ENCODE measurements at regions of chr11 and their contacts with region 1.

Region 1: GRCh38 chr11:125111343-125112207 is at the start of gene TMEM218:
- DNase-seq: peak; percentile 98
- H3K4me3 Mint-ChIP-seq: peak within 1 kb of the TSS; percentile 88
- H3K27ac Mint-ChIP-seq: peak within 1 kb of the TSS; percentile 82
- H3K4me1 Mint-ChIP-seq: peaks cover 13% of the 10 kb centered on the region
- H3K27me3 Mint-ChIP-seq: no peaks in the 10 kb centered on the region
- total RNA-seq, gene TMEM218: 12.8 to 14.8 TPM

Region 2: DNA sequence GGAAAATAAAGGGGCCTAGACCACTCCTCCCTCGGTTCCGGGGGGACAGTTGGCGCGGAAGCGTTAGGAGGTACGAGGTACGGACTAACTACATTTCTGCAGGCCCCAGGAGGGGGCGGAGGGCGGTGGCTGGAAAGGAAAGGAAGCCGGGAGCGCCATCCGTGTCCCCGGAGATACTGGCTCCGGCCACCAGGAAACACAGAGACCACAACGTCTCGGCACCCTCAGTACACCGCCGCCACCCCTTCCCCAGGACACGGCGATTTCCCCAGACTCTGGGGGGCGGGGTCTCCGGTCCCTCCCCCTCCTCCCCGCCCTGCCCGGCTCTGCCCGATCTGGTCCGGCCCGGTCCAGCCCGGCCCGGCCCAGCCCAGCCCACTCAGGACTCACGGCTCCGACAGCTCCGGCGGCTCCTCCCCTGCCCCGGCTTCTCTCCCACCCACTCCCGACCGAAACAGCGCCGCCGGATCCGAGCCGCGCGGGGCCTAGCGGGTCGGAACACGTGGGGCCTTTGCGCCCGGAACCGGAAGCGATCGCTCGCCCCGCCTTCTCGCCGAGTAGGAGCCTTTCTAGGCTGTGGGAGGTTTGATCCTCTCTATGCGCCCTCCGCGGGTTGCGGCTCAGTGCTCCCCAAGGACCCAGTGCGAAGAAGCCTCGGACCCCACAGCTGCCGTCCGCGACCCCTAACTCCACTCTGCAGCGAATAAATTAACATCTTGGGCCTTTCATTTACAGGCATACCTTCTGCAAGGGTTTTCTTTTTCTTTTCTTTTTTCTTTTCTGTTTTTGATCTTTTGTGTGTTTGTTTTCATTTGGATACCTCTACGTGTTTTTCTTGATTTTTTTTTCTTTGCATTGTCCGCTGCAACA is 1370.2 kb before region 1 on chr11 and contains the start of gene ZNF202:
- CTCF ChIA-PET with region 1: no interaction called
- POLR2A ChIA-PET with region 1: no interaction called
- intact Hi-C with region 1: loop called (anchors 2 kb)
- DNase-seq: peak; percentile 95
- H3K4me3 Mint-ChIP-seq: peak within 1 kb of the TSS; percentile 97
- H3K27ac Mint-ChIP-seq: peak within 1 kb of the TSS; percentile 83
- H3K4me1 Mint-ChIP-seq: peaks cover 34% of the 10 kb centered on the region
- H3K27me3 Mint-ChIP-seq: no peaks in the 10 kb centered on the region
- total RNA-seq, gene ZNF202: 7.8 to 7.9 TPM

Region 3: DNA sequence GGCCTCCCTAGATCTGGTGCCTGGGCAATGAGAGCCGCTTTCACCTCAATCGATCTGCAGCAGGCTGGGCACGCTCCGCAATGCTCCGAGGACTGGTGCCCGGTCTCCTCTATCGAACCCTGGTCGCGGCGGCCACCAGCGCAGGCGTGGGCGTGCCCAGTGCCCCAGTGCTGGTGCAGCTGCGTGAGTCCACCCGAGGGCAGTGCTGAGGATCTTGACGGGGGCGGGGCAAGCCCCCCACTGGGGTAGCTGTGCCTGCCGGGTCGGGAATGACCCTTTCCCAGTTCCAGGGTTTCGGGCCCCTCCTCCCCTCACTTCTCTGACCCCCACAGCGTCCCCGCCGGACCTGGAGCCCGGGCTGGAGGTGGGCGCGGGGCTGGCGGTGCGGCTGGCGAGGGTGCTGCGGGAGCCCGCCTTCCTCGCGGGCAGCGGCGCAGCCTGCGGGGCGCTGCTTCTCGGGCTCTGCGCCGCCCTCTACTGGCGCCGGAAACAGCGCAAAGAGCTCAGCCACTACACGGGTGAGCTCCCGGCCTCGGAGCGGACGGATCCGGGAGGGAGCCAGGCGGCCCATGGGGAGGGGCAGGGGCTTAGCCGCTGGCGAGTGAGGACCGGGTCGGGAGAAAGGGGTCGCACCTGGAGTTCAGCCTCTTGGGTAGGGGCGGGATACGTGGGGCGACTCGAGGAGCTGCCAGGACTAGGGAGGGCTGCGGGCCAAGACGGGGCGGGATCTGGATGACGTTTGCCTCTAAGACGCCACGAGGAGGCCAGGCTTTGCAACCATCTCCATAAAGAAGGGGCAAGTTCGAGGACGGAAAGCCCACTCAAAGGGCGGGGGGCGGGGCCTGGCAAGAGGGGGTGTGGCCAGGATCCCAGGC is 235.4 kb before region 1 on chr11:
- CTCF ChIA-PET with region 1: interaction called, 3 read pairs
- POLR2A ChIA-PET with region 1: no interaction called
- intact Hi-C with region 1: loop called (anchors 2 kb)
- DNase-seq: peak; percentile 85
- H3K4me3 Mint-ChIP-seq: peak overlapping the region; percentile 77
- H3K27ac Mint-ChIP-seq: peak overlapping the region; percentile 61
- H3K4me1 Mint-ChIP-seq: peaks cover 13% of the 10 kb centered on the region
- H3K27me3 Mint-ChIP-seq: peaks cover 15% of the 10 kb centered on the region

Region 4: GRCh38 chr11:125062931-125063428 is 48.6 kb before region 1 on chr11 and contains the start of gene SLC37A2:
- CTCF ChIA-PET with region 1: no interaction called
- POLR2A ChIA-PET with region 1: no interaction called
- intact Hi-C with region 1: loop called (anchors 5 kb)
- DNase-seq: peak; percentile 72
- H3K4me3 Mint-ChIP-seq: peak within 1 kb of the TSS; percentile 72
- H3K27ac Mint-ChIP-seq: no peak within 1 kb of the TSS
- H3K4me1 Mint-ChIP-seq: peaks cover 13% of the 10 kb centered on the region
- H3K27me3 Mint-ChIP-seq: peaks cover 19% of the 10 kb centered on the region
- total RNA-seq, gene SLC37A2: 0.46 to 0.93 TPM

Region 5: GRCh38 chr11:125093502-125093901 is 18.1 kb before region 1 on chr11:
- CTCF ChIA-PET with region 1: no interaction called
- POLR2A ChIA-PET with region 1: no interaction called
- intact Hi-C with region 1: no loop called
- DNase-seq: no peak
- H3K4me3 Mint-ChIP-seq: no peak overlapping the region
- H3K27ac Mint-ChIP-seq: no peak overlapping the region
- H3K4me1 Mint-ChIP-seq: no peaks in the 10 kb centered on the region
- H3K27me3 Mint-ChIP-seq: no peaks in the 10 kb centered on the region

Region 6: DNA sequence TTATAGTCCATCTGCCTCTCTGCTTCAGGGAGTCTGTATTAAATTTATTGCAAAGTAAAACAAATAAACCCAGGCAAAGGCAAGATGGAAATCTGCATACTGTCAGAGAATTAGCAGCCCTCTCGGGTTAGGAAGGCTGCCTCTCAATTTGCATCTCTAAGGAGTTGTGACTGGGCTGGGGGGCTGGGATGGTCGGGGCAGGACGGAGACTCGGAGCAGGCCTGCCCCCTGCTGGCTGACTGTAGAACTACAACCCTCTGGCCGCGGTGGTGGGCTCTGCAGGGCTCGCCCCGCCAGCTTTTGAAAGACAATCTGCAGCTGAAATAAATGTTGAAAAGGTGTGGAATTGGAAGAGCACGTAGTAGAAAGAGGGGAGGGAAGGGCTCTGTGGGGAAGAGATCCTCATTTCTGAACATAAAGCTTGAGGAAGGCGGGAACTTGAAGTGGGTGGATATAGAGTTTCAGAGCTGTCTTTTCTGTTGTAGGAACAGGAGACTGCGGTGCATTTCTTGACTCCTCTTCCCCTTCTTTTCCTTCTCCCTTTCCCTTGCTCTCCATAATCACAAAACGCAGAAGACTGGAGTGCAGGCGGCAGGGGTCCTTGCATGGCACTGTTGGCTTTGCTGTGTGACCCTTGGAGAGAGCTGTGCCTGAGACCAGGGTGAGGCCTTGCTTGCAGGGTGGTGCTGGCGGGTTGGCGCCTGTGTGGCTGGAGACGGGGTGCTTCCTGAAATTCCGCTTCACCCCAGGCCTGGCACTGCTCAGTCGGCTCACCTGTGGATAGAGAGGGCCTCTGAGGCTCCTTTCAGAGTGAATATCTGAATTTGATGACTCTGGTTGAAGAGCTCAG is 30.3 kb after region 1 on chr11:
- CTCF ChIA-PET with region 1: interaction called, 51 read pairs
- POLR2A ChIA-PET with region 1: no interaction called
- intact Hi-C with region 1: no loop called
- DNase-seq: peak; percentile 62
- H3K4me3 Mint-ChIP-seq: no peak overlapping the region
- H3K27ac Mint-ChIP-seq: no peak overlapping the region
- H3K4me1 Mint-ChIP-seq: peaks cover 4% of the 10 kb centered on the region
- H3K27me3 Mint-ChIP-seq: peaks cover 21% of the 10 kb centered on the region

Region 7: GRCh38 chr11:125170510-125171031 is 59.0 kb after region 1 on chr11:
- CTCF ChIA-PET with region 1: no interaction called
- POLR2A ChIA-PET with region 1: no interaction called
- intact Hi-C with region 1: no loop called
- DNase-seq: no peak
- H3K4me3 Mint-ChIP-seq: no peak overlapping the region
- H3K27ac Mint-ChIP-seq: no peak overlapping the region
- H3K4me1 Mint-ChIP-seq: peaks cover 11% of the 10 kb centered on the region
- H3K27me3 Mint-ChIP-seq: peaks cover 66% of the 10 kb centered on the region